CD8-positive, alpha-beta T cell (primary cell): ENCODE measurements at regions of chr1 and their contacts with region 1.

Region 1: GRCh38 chr1:23422241-23423030 is 2.1 kb downstream of the TCEA3 start:
- DNase-seq: peak in 8 of 9 experiments; percentile 37 to 80 (median 55)
- ATAC-seq: peak; percentile 77
- H3K4me3 ChIP-seq: peak overlapping the region in 1 of 2 experiments; percentile 21
- H3K4me3 Mint-ChIP-seq: peak overlapping the region; percentile 89
- H3K27ac ChIP-seq: peak overlapping the region in 1 of 2 experiments; percentile 43
- H3K27ac Mint-ChIP-seq: peak overlapping the region; percentile 76
- H3K4me1 ChIP-seq: peaks cover 32% of the 10 kb centered on the region
- H3K4me1 Mint-ChIP-seq: peaks cover 36% of the 10 kb centered on the region
- H3K27me3 ChIP-seq: no peaks in the 10 kb centered on the region
- H3K27me3 Mint-ChIP-seq: peaks cover 3% of the 10 kb centered on the region
- CTCF ChIP-seq: no peak

Region 2: DNA sequence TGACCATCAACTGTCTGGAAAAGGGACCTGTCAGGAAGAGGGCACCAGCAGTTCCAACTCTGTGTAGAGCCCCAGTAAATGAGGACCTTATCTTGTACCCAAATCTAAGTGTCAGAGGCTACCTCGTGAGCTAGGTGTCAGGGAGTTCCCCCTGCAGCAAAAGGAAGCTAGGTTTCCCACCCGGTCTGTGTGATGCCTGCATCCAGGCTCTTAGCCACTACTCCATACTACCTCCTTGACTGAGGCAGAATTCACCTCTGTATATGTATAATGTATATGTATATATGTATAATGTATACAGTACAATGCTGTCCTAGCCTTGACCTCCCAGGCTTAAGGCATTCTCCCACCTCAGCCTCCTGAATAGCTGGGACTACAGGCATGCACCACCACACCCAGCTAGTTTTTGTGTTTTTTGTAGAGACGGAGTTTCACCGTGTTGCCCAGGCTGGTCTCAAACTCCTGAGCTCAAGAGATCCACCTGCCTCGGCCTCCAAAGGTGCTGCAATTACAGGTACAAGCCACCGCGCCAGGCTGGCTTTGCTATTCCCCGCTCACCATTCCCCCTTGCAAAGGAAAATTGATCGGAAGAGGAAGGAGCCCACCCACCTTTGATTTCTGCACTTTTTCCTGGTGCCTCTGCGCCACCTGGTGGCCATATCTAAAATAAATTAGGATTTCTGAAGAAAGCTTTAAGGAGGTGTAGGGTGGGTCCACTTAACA is 238.1 kb before region 1 on chr1:
- CTCF ChIA-PET with region 1: no interaction called
- POLR2A ChIA-PET with region 1: no interaction called
- intact Hi-C with region 1: no loop called
- DNase-seq: peak in 8 of 9 experiments; percentile 17 to 75 (median 43)
- ATAC-seq: peak; percentile 48
- H3K4me3 ChIP-seq: peak overlapping the region in 1 of 2 experiments; percentile 3
- H3K4me3 Mint-ChIP-seq: peak overlapping the region; percentile 74
- H3K27ac ChIP-seq: no peak overlapping the region
- H3K27ac Mint-ChIP-seq: no peak overlapping the region
- H3K4me1 ChIP-seq: no peaks in the 10 kb centered on the region
- H3K4me1 Mint-ChIP-seq: peaks cover 8% of the 10 kb centered on the region
- H3K27me3 ChIP-seq: no peaks in the 10 kb centered on the region
- H3K27me3 Mint-ChIP-seq: peaks cover 4% of the 10 kb centered on the region
- CTCF ChIP-seq: peak; percentile 94

Region 3: GRCh38 chr1:23286401-23286800 is 136.0 kb before region 1 on chr1:
- CTCF ChIA-PET with region 1: no interaction called
- POLR2A ChIA-PET with region 1: no interaction called
- intact Hi-C with region 1: no loop called
- DNase-seq: no peak
- ATAC-seq: no peak
- H3K4me3 ChIP-seq: no peak overlapping the region
- H3K4me3 Mint-ChIP-seq: no peak overlapping the region
- H3K27ac ChIP-seq: no peak overlapping the region
- H3K27ac Mint-ChIP-seq: no peak overlapping the region
- H3K4me1 ChIP-seq: no peaks in the 10 kb centered on the region
- H3K4me1 Mint-ChIP-seq: no peaks in the 10 kb centered on the region
- H3K27me3 ChIP-seq: no peaks in the 10 kb centered on the region
- H3K27me3 Mint-ChIP-seq: no peaks in the 10 kb centered on the region
- CTCF ChIP-seq: no peak

Region 4: GRCh38 chr1:23403735-23404486 is 18.5 kb before region 1 on chr1:
- CTCF ChIA-PET with region 1: interaction called, 10 read pairs
- POLR2A ChIA-PET with region 1: interaction called, 8 read pairs
- intact Hi-C with region 1: no loop called
- DNase-seq: peak; percentile 69 to 88 (median 78)
- ATAC-seq: peak; percentile 100
- H3K4me3 ChIP-seq: no peak overlapping the region
- H3K4me3 Mint-ChIP-seq: no peak overlapping the region
- H3K27ac ChIP-seq: no peak overlapping the region
- H3K27ac Mint-ChIP-seq: no peak overlapping the region
- H3K4me1 ChIP-seq: peaks cover 4% of the 10 kb centered on the region
- H3K4me1 Mint-ChIP-seq: peaks cover 9% of the 10 kb centered on the region
- H3K27me3 ChIP-seq: no peaks in the 10 kb centered on the region
- H3K27me3 Mint-ChIP-seq: no peaks in the 10 kb centered on the region
- CTCF ChIP-seq: peak; percentile 87

Region 5: DNA sequence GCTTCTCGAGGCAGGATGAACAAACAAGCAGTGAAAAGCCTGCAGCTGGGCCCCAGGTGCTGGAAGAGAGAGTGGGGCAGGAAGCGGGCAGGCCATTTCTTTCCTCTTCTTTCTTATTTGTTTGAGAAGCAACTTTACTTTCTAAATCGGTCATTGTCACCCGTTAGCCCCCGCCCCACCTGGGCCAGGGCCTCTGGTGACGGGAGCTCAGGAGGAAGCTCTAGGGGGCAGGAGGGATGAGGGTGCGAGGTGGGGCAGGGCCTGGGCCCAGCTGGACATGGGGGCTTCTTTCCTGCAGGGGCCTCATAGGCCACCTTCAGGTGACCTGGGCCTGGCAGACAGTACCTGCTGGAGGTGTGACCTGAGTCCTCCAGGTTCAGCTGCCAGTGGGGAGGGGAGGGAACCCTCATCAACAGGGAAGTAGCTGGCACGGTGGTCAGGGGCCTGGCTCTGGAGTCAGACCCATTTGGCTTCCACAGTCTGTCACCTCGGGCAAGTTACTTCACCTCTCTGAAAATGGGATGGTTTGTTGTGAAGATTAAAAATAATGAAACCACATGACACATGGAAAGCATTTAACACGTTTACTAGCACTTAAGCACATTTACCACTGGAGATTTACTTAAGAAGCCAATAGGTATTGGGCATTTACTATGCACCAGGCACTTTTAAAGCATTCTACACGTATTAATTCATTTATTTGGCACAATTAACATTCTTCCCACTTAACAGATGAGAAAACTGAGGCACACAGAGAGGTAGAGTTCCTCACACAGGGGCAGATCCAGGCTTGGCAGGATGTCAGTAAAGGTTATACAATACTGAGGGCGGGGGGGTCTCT is 191.0 kb after region 1 on chr1:
- CTCF ChIA-PET with region 1: no interaction called
- POLR2A ChIA-PET with region 1: no interaction called
- intact Hi-C with region 1: no loop called
- DNase-seq: peak in 7 of 9 experiments; percentile 33 to 78 (median 61)
- ATAC-seq: peak; percentile 61
- H3K4me3 ChIP-seq: peak overlapping the region in 1 of 2 experiments; percentile 8
- H3K4me3 Mint-ChIP-seq: peak overlapping the region; percentile 54
- H3K27ac ChIP-seq: peak overlapping the region; percentile 40 to 72
- H3K27ac Mint-ChIP-seq: peak overlapping the region; percentile 90
- H3K4me1 ChIP-seq: peaks cover 65% of the 10 kb centered on the region
- H3K4me1 Mint-ChIP-seq: peaks cover 83% of the 10 kb centered on the region
- H3K27me3 ChIP-seq: no peaks in the 10 kb centered on the region
- H3K27me3 Mint-ChIP-seq: no peaks in the 10 kb centered on the region
- CTCF ChIP-seq: no peak